Prostate gland (tissue), 2 donors: ENCODE measurements at regions of chr9 and their contacts with region 1.

Region 1: GRCh38 chr9:14322211-14323082 is 8.5 kb upstream of the NFIB start:
- DNase-seq: peak; percentile 93
- H3K4me3 ChIP-seq: peak overlapping the region; percentile 59 to 67
- H3K27ac ChIP-seq: peak overlapping the region; percentile 98 to 99
- H3K4me1 ChIP-seq: no peaks in the 10 kb centered on the region
- H3K27me3 ChIP-seq: no peaks in the 10 kb centered on the region
- CTCF ChIP-seq: peak; percentile 46 to 92 (median 58)
- POLR2A ChIP-seq: peak; percentile 70

Region 2: DNA sequence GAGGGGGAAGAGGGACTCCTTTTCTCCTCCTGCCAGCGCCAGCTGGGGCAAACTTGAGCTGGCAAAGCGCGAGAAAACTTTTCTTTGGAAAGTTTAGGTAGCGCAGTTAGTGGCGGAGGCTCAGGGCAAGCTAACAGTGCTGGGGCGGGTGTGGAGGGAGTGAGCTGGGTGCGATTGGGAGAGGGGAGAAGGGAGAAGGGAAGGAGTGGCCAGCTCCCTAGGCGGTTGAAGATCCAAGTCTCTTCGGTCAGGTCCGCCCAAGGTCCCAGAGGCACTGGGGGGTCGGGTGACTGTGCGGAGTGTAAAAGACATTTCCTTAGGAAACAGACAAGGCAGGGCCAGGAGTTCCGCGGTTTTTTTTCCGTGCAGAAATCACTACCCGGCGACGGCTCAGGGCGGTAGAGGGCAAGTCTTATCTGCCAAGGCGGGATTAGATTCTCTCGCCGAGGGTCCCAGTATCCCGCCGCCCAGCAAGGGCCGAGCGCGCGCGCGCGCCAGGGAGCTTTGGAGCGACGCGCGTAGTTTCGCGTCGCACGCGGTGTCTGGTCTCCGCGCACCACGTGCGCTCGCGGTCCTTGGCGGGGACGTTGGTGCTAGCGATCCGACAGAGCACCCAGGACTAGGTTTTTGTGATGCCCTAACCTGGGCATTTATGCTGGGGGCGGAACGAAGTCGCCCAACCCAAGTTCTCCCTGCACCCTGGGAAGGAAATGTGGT is 25.1 kb after region 1 on chr9:
- intact Hi-C with region 1: loop called (anchors 2 kb)
- DNase-seq: no peak
- H3K4me3 ChIP-seq: peak overlapping the region; percentile 33 to 45
- H3K27ac ChIP-seq: peak overlapping the region; percentile 81 to 83
- H3K4me1 ChIP-seq: no peaks in the 10 kb centered on the region
- H3K27me3 ChIP-seq: no peaks in the 10 kb centered on the region
- CTCF ChIP-seq: peak in 2 of 4 experiments; percentile 25 to 31
- POLR2A ChIP-seq: peak; percentile 9

Region 3: DNA sequence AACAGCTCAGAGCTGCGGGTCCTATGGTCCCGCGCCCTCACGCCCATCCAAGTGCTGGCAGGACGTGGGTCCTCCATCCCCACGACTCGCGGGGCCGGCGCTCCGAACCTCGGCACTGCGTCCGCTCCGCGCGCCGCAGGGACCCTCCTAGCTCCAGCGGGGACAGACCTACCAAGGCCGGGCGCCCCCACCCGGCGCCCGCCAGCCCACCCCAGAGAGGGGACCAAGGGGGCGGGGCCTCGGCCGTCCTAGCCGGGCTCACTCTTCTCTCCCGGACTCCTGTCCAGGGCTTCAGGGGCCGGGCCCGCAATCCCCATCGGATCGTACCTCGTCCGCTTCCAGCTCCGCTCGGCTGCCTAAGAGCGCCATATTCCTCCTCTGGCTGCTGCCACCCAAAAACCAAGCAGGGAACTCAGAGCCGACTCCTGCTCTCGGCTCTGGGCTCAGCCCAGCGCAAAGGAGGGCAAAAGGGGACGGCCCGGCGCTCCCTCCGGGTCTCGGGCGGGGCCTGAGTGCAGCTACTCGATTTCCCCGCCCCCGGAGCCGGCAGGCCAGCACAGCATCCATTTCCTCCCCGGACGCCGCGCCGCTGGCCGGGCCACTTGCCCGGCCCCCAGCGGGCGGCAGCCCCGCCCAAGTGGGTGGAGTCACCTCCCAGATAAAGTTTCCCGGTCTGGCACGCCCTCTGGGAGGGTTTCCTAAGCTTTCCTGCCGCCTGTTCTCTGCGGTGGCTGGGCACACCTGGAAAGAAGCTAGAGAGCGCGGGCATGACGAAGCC is 984.5 kb after region 1 on chr9 and contains the start of gene TTC39B:
- intact Hi-C with region 1: no loop called
- DNase-seq: peak; percentile 92
- H3K4me3 ChIP-seq: peak within 1 kb of the TSS; percentile 79 to 83
- H3K27ac ChIP-seq: peak within 1 kb of the TSS; percentile 79 to 91
- H3K4me1 ChIP-seq: no peaks in the 10 kb centered on the region
- H3K27me3 ChIP-seq: no peaks in the 10 kb centered on the region
- CTCF ChIP-seq: peak in 3 of 4 experiments; percentile 24 to 31 (median 25)
- POLR2A ChIP-seq: peak; percentile 77
- total RNA-seq, gene TTC39B: 4.2 to 4.3 TPM